Endothelial cell of umbilical vein (primary cell): ENCODE measurements at regions of chr2 and their contacts with region 1.

Region 1: GRCh38 chr2:222024932-222025880 is 273.6 kb downstream of the PAX3 start:
- DNase-seq: peak; percentile 50
- H3K4me3 ChIP-seq: no peak overlapping the region
- H3K27ac ChIP-seq: no peak overlapping the region
- H3K4me1 ChIP-seq: no peaks in the 10 kb centered on the region
- H3K27me3 ChIP-seq: peaks cover 0 to 8% of the 10 kb centered on the region in 2 experiments
- CTCF ChIP-seq: peak; percentile 24 to 45
- POLR2A ChIP-seq: no peak

Region 2: DNA sequence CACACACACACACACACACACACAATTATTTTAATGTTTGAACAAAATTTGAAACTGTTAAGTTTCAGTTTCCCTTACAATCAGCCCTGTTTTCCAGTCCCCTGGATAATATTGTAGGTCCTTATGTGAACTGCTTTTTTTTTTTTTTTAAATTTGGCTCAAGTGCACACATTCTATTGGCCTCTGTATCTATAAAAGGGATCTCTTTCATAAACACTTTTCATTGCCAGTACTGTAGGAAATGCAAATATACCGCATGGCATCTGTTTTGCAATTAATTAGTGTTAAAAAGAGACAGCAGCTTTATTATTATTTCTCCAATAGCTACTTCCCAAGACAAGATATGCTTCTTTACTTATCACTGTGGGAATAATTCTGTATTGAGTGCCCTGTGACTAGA is 1191.8 kb before region 1 on chr2:
- CTCF ChIA-PET with region 1: no interaction called
- POLR2A ChIA-PET with region 1: no interaction called
- dilution Hi-C with region 1: no loop called
- intact Hi-C with region 1: no loop called
- DNase-seq: no peak
- H3K4me3 ChIP-seq: no peak overlapping the region
- H3K27ac ChIP-seq: no peak overlapping the region
- H3K4me1 ChIP-seq: no peaks in the 10 kb centered on the region
- H3K27me3 ChIP-seq: no peaks in the 10 kb centered on the region
- CTCF ChIP-seq: no peak
- POLR2A ChIP-seq: no peak

Region 3: DNA sequence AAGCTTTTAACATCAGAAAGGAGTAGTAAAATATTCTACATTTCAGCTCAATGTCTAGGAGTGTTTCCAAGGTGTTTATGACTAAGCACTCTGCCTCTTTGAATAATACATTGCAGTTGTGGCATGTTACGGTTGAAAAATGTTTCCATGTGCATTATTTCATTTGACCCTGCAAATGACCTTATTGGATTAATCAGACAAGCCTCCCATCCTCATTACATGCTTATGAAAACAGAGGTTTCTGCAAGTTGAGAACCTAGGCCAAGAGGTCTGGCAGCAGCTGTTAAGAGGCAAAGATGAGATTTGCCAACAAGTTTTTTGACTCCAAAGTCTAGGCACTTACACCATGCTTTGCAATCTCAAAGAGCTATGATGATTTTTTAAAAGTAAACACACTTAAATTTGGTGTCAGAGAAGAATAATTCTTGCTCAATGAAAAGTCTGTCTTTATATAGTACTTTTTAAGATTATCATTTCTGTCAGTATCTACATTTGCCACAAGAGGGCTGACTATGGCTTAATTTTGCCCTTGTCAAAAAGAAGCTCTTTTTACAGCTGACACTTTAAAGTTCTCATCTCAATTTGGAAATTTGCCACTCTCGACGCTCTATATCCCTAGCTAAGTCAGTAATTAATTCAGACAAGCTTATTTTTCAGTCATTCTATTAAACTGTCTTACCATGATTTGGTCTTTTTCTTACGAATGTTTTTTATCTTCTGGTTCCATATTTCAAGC is 13.0 kb after region 1 on chr2:
- CTCF ChIA-PET with region 1: interaction called, 19 read pairs
- POLR2A ChIA-PET with region 1: no interaction called
- dilution Hi-C with region 1: no loop called
- intact Hi-C with region 1: no loop called
- DNase-seq: no peak
- H3K4me3 ChIP-seq: no peak overlapping the region
- H3K27ac ChIP-seq: no peak overlapping the region
- H3K4me1 ChIP-seq: no peaks in the 10 kb centered on the region
- H3K27me3 ChIP-seq: no peaks in the 10 kb centered on the region
- CTCF ChIP-seq: peak in 1 of 2 donors; percentile 10
- POLR2A ChIP-seq: no peak

Region 4: DNA sequence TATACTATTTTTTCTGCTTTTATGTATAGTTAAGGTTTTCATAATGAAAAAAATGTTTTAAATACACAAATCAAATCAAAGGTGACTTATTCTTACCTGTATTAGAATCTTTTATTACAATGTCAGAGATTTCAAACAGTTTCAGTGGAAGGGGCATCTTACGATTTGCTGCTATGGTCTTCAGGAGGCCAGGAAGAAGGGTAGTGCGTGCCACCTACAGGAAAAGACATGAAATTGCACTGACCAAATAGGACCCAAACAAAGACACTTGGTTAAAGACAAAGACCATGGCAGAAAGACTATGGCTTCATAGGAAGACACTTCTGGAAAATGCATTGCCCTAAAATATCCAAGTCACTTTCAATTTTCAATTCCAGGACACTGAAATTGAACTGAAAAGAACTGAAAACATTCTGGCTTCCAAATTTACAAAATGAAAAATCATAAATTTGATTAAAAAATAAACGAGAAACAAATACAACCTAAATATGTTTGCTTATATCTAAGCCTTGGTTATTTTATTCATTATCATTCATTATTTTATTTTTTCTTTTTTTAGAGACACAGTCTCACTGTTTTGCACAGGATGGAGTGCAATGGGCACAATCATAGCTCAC is 588.6 kb after region 1 on chr2:
- CTCF ChIA-PET with region 1: interaction called, 18 read pairs
- POLR2A ChIA-PET with region 1: no interaction called
- dilution Hi-C with region 1: no loop called
- intact Hi-C with region 1: loop called (anchors 10 kb)
- DNase-seq: peak; percentile 57
- H3K4me3 ChIP-seq: no peak overlapping the region
- H3K27ac ChIP-seq: no peak overlapping the region
- H3K4me1 ChIP-seq: no peaks in the 10 kb centered on the region
- H3K27me3 ChIP-seq: no peaks in the 10 kb centered on the region
- CTCF ChIP-seq: peak; percentile 63 to 69
- POLR2A ChIP-seq: no peak